ENCODE measurements at regions of chr11 and their contacts with region 1.

Region 1: GRCh38 chr11:9748361-9748970 is 84.6 kb downstream of the SWAP70 start:
- DNase-seq: peak; percentile 44
- H3K4me3 ChIP-seq: no peak overlapping the region
- H3K27ac ChIP-seq: no peak overlapping the region
- H3K4me1 ChIP-seq: no peaks in the 10 kb centered on the region
- H3K27me3 ChIP-seq: no peaks in the 10 kb centered on the region
- CTCF ChIP-seq: peak; percentile 33 to 79 (median 68)
- POLR2A ChIP-seq: no peak

Region 2: GRCh38 chr11:9663699-9664275 is 84.7 kb before region 1 on chr11 and contains the start of gene SWAP70:
- intact Hi-C with region 1: loop called (anchors 10 kb)
- DNase-seq: peak; percentile 88
- H3K4me3 ChIP-seq: peak within 1 kb of the TSS; percentile 90 to 96
- H3K27ac ChIP-seq: peak within 1 kb of the TSS; percentile 84 to 95
- H3K4me1 ChIP-seq: no peaks in the 10 kb centered on the region
- H3K27me3 ChIP-seq: no peaks in the 10 kb centered on the region
- CTCF ChIP-seq: peak; percentile 23 to 77 (median 50)
- POLR2A ChIP-seq: peak; percentile 59
- total RNA-seq, gene SWAP70: 20.8 to 25.2 TPM

Region 3: GRCh38 chr11:10044618-10045017 is 296.2 kb after region 1 on chr11:
- intact Hi-C with region 1: no loop called
- DNase-seq: no peak
- H3K4me3 ChIP-seq: no peak overlapping the region
- H3K27ac ChIP-seq: no peak overlapping the region
- H3K4me1 ChIP-seq: no peaks in the 10 kb centered on the region
- H3K27me3 ChIP-seq: no peaks in the 10 kb centered on the region
- CTCF ChIP-seq: no peak
- POLR2A ChIP-seq: no peak